GM18951 (cell line): ENCODE measurements at regions of chr10 and their contacts with region 1.

Region 1: GRCh38 chr10:131874991-131875451 is 25.8 kb upstream of the PPP2R2D start:
- POLR2A ChIP-seq: no peak

Region 2: GRCh38 chr10:130190055-130190736 is 1684.8 kb before region 1 on chr10:
- in situ Hi-C with region 1: loop called (anchors 10 kb)
- POLR2A ChIP-seq: no peak

Region 3: GRCh38 chr10:132142411-132143161 is 267.6 kb after region 1 on chr10:
- in situ Hi-C with region 1: loop called (anchors 25 kb)
- POLR2A ChIP-seq: no peak